IMR-90 (cell line): ENCODE measurements at regions of chr14 and their contacts with region 1.

Region 1: DNA sequence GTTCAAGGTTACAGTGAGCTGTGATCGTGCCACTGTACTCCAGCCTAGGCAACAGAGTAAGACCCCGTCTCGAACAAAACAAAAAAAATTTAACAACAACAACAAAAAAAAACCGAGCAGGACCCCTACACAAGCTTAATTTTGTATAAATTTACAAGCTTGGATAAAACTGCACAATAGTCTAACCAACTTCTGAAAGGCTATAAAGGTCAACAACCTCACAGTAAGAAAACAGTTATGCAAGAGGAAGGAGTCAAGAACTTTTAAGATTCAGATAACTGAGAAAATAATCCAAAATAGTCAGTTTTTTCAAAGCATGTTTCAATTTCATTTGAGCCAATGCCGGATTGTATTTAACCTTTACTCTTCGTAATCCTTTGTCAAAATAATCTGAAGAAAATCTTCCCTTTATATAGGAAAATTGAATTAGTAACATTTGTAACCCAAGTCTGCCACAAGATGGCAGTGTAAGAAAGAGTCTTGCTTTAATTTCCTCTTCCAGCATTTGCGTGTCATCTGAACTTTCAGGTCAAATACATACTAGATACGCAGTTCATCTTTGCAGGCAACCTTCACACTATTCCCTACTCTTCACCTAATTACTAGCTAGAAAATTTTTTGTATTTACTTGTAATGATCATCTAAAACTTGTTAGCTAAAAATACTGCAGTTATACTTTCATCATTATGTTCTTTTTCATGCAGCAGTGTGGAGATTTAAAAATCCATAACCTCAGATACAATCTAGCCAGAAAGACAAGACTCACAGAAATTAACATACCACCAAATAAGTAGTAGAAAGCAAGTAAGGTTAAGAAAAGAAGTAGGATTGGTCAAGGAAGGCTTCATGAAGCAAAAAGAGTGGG is 5.8 kb downstream of the CCNB1IP1 start:
- DNase-seq: peak; percentile 72
- ATAC-seq: peak; percentile 91
- H3K4me3 ChIP-seq: no peak overlapping the region
- H3K27ac ChIP-seq: no peak overlapping the region
- H3K4me1 ChIP-seq: no peaks in the 10 kb centered on the region
- H3K27me3 ChIP-seq: no peaks in the 10 kb centered on the region
- CTCF ChIP-seq: peak; percentile 76
- POLR2A ChIP-seq: no peak
- RAD21 ChIP-seq: peak; percentile 76

Region 2: DNA sequence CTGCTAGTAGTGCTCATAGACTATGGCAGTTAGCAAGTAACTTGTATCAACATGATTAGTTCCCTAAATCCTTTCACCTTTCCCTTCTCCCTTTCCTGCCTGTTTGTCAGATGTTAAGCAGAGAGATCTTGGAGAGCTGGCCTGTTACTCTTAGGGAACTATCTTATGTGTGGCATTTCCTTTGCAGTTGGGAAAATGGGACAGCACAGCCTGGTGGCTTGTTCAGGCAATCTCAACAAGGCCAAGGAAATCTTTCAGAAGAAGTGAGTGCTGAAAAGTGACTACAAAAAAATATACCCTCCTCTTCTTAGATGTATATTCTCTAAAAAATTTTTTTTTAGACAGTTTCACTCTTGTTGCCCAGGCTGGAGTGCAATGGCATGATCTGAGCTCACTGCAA is 23.6 kb after region 1 on chr14:
- CTCF ChIA-PET with region 1: interaction called, 7 read pairs
- POLR2A ChIA-PET with region 1: no interaction called
- dilution Hi-C with region 1: no loop called
- in situ Hi-C with region 1: no loop called
- intact Hi-C with region 1: loop called (anchors 2 kb)
- DNase-seq: peak; percentile 17
- ATAC-seq: no peak
- H3K4me3 ChIP-seq: no peak overlapping the region
- H3K27ac ChIP-seq: no peak overlapping the region
- H3K4me1 ChIP-seq: no peaks in the 10 kb centered on the region
- H3K27me3 ChIP-seq: no peaks in the 10 kb centered on the region
- CTCF ChIP-seq: 0 out of 2 replicates have a peak, but pooled peaks have one; percentile 22
- POLR2A ChIP-seq: no peak
- RAD21 ChIP-seq: 0 out of 2 replicates have a peak, but pooled peaks have one; percentile 12

Region 3: DNA sequence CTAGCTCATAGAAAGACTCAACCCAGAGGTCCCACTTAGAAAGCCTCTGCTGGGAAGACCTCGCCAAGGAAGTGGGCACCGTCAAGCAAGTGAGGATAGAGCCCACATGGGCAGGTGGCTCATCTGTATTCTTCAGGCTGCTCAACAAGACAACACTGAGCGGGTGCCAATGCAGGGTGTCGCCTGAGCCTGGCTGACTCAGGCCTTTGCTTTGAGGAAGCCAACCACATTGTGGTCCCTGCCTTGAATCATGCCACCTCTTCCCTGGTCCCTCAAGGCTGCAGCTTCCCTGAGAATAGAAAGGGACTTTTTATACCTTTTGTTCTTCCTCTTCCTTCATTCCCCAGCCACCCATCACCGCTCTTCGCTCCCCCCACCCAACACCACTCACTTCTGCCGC is 709.5 kb after region 1 on chr14:
- CTCF ChIA-PET with region 1: no interaction called
- POLR2A ChIA-PET with region 1: no interaction called
- dilution Hi-C with region 1: no loop called
- in situ Hi-C with region 1: no loop called
- intact Hi-C with region 1: no loop called
- DNase-seq: no peak
- ATAC-seq: no peak
- H3K4me3 ChIP-seq: no peak overlapping the region
- H3K27ac ChIP-seq: no peak overlapping the region
- H3K4me1 ChIP-seq: peaks cover 2% of the 10 kb centered on the region; the same call in 1 of the 2 replicates
- H3K27me3 ChIP-seq: peaks cover 44% of the 10 kb centered on the region
- CTCF ChIP-seq: no peak
- POLR2A ChIP-seq: no peak
- RAD21 ChIP-seq: no peak